ENCODE measurements at regions of chr14 and their contacts with region 1.

Region 1: DNA sequence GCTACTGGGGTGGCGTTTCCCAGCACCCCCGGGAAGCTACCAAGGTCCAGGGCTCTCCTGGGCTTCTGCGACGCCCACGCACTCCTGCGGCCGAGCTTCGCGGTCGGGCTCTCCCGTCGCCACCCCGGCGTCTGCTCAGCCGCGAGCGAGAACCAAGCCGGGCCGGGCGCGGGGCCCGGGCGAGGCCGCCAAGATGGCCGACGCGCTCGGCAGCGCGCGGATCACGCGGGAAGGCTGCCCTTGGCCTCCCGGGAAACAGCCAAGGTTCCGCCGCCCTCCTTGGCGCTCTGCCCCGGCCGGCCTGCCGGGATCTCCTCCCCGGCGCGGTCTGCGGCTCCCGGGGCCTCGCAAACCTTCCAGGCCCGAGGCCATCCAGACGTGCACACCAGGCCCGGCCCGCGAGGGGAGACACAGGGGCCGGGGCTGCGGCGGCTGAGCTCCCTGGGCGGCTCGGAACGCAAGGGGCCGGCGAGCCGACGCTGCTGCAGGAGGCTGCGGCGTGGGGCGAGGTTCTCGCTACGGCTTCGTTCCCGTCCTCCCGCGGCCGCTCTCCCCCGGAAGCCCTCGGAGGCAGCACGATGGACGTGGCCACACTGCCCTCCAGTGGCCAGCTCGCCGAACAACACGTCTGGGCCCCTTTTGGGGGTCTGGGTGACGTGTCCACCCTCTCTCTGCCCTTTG is 23.5 kb upstream of the ZFP36L1 start:
- DNase-seq: peak; percentile 87
- H3K27ac ChIP-seq: peak overlapping the region; percentile 94
- CTCF ChIP-seq: peak; percentile 91

Region 2: GRCh38 chr14:67934008-67934481 is 882.4 kb before region 1 on chr14:
- CTCF ChIA-PET with region 1: interaction called, 16 read pairs
- POLR2A ChIA-PET with region 1: no interaction called
- DNase-seq: peak; percentile 70
- H3K27ac ChIP-seq: no peak overlapping the region
- CTCF ChIP-seq: peak; percentile 78

Region 3: GRCh38 chr14:68248481-68249255 is 567.7 kb before region 1 on chr14:
- CTCF ChIA-PET with region 1: interaction called, 22 read pairs
- POLR2A ChIA-PET with region 1: no interaction called
- DNase-seq: peak; percentile 39
- H3K27ac ChIP-seq: peak overlapping the region; percentile 77
- CTCF ChIP-seq: peak; percentile 61

Region 4: GRCh38 chr14:68856572-68856971 is 40.2 kb after region 1 on chr14:
- CTCF ChIA-PET with region 1: no interaction called
- POLR2A ChIA-PET with region 1: no interaction called
- DNase-seq: no peak
- H3K27ac ChIP-seq: no peak overlapping the region
- CTCF ChIP-seq: no peak

Region 5: DNA sequence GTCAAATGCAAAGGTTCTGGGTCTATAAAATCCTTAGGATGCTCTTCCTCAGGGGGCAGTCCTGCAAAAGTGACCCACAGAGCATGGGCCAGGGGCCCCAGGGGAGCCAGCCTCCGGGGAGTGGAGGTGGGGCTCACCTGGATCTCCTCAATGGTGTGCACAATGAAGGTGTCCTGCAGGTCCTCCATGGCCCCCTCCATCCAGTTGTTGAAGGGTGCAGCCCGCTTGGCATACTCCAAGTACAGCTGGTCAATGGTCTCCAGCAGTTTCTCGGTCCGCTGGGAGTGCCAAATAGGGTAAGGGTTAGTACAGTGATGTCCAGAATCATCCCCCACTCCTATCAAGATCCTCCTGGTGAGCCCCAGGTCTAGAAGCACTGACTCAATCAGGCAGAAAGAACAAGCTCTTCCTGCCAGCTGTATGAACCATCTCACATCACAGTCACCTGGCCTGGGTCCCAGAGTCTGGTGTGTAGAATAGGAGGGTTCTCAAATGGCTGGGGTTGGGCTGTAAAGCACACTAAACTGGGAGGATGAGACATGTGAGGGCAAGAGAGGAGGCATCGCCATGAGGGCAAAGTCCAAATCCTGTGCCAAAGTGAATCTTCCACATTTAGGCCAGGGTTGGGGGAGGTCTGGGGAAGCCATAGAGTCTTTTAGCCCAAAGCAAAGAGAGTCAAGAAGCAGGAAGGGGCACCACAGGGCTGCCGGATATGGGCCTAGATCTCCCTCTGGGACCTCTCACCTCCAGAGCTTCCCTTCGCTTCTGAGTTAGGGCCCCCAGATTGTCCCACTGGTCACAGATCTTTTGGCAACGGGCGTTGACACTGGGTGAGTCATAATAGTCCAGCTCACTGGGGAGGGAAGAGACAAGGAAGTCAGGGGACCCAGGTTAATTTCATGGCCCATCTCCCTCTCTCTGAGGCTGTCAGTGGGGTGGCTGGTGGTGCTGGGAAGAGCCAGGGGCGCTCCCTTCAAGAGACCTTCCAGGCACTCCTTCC is 67.9 kb after region 1 on chr14:
- CTCF ChIA-PET with region 1: no interaction called
- POLR2A ChIA-PET with region 1: no interaction called
- DNase-seq: peak; percentile 62
- H3K27ac ChIP-seq: peak overlapping the region; percentile 96
- CTCF ChIP-seq: no peak

Region 6: GRCh38 chr14:68897559-68898155 is 81.3 kb after region 1 on chr14:
- CTCF ChIA-PET with region 1: no interaction called
- POLR2A ChIA-PET with region 1: no interaction called
- DNase-seq: no peak
- H3K27ac ChIP-seq: 0 out of 2 replicates have a peak overlapping the region, but pooled peaks have one; percentile 15
- CTCF ChIP-seq: no peak